Common myeloid progenitor, CD34-positive (primary cell): ENCODE measurements at regions of chr16 and their contacts with region 1.

Region 1: DNA sequence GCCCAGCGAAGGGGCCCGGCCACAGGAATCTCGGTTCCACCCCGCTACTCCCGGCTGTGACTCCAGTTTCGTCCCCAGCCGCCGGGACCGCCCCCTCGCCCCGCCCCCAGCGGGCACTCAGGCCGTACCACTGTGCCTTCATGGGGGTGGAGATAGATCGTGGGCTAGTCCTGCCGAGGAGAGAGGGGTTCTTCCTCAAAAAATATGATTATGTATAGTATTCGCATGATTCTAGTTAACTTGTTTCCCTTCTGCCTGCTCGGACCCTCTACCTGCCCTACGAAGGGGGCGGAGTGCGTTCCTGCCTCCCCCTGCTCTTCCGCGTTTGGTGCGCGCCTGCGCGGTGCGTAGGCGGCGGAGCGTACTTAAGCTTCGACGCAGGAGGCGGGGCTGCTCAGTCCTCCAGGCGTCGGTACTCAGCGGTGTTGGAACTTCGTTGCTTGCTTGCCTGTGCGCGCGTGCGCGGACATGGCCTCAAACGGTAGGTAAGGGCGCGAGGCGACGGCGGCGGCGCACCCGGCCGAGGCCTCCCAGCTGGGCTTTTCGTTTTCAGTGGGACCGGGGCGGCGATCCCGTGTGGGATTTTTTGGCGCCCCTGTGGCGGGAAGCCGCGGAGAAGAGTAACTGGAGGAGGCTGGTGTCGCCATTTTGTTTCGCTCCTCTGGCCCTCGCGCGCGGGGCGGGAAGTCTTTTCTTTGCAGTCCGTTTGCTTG is at the start of gene FUS:
- DNase-seq: peak; percentile 91 to 97 (median 94)
- H3K4me3 ChIP-seq: peak within 1 kb of the TSS; percentile 83 to 95 (median 92)
- H3K27ac ChIP-seq: peak within 1 kb of the TSS; percentile 97 to 99
- H3K4me1 ChIP-seq: peaks cover 17 to 61% (median 52%) of the 10 kb centered on the region in 4 experiments
- H3K27me3 ChIP-seq: no peaks in the 10 kb centered on the region

Region 2: DNA sequence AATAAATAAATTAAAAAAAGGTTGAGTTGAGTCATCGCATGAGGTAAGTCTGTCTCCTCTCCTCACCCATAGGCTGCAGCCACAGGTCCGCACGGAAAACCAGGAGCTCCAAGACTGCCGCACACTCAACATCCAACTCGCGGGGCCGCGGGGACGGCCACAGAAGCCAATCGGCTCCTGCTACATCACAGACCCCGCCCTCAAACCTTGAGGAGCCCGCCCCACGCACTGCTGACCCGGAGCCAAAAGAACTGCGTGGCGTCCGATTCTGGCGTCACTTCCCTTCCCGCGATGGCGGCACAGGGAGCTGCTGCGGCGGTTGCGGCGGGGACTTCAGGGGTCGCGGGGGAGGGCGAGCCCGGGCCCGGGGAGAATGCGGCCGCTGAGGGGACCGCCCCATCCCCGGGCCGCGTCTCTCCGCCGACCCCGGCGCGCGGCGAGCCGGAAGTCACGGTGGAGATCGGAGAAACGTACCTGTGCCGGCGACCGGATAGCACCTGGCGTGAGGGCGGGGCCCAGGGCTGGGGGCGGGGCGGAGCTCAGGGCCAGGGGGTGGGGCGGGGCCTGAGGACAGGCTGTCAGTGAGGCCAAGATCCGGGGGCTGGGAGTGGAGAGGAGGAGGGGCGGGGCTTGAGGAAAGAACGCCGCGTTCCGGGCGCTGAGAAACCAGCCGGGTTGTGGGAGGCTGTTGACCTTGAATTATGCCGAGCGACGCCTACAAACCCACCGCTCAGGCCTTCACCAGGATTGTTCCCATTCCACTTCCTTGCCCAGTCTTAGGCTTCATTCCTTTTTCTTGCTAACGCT is 62.3 kb before region 1 on chr16 and contains the start of gene KAT8:
- CTCF ChIA-PET with region 1: interaction called, 3 read pairs
- POLR2A ChIA-PET with region 1: interaction called, 10 read pairs
- DNase-seq: peak; percentile 98 to 99 (median 99)
- H3K4me3 ChIP-seq: peak within 1 kb of the TSS; percentile 64 to 96 (median 87)
- H3K27ac ChIP-seq: peak within 1 kb of the TSS; percentile 51 to 88
- H3K4me1 ChIP-seq: peaks cover 12 to 40% (median 34%) of the 10 kb centered on the region in 4 experiments
- H3K27me3 ChIP-seq: no peaks in the 10 kb centered on the region

Region 3: DNA sequence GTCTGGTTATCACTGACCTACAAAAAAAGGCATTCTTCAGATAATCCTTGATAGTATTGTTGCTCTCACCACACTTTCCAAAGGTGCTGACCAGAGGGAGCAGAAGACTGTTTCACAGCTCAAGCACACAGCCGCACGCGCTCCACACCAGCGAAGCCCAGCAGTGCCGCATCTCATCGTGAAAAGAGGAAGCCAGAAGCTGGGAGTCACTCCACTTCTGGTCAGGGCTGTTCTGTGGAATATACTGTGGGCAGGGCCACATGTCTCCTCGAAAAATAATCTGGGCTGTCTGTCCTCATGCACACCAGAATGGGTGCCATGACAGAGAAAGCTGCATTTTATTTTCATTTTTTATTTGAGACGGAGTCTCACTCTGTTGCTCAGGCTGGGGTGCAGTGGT is 22.8 kb before region 1 on chr16:
- CTCF ChIA-PET with region 1: interaction called, 13 read pairs
- POLR2A ChIA-PET with region 1: interaction called, 6 read pairs
- DNase-seq: peak in 2 of 3 donors; percentile 68 to 74
- H3K4me3 ChIP-seq: peak overlapping the region in 2 of 7 experiments; percentile 11 to 50
- H3K27ac ChIP-seq: no peak overlapping the region
- H3K4me1 ChIP-seq: peaks cover 0 to 11% (median 6%) of the 10 kb centered on the region in 4 experiments
- H3K27me3 ChIP-seq: peaks cover 0 to 1% (median 0%) of the 10 kb centered on the region in 5 experiments

Region 4: DNA sequence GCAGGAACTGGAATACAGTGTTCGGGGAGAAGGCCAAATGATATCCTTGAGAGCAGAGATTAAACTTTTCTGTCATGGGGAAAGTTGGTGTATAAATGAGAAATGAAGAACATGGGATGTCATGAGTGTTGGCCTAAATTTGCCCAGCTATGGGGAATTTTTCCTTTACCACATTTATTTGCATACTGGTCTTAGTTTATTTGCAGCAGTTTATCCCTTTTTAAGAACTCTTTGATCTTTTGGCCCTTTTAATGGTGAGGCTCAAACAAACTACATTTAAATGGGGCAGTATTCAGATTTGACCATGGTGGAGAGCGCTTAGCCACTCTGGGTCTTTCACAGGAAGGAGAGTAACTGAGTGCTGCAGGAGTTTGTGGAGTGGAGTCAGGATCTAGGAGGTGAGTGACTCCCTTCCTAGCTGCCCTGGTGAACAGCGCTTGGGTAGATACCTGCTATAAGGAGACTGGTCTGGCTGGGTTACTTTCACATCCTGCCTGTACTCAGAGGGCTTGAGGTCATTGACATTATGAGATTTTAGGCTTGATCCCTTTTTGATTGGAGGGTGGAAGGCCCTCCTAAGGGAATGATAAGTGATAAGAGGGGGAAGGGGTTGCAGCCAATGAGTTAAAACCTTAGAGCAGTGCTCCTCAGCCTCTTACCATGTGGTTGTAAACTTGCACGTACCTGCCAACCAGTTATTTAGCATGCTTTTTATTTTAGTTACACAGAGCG is 12.0 kb after region 1 on chr16:
- CTCF ChIA-PET with region 1: no interaction called
- POLR2A ChIA-PET with region 1: interaction called, 12 read pairs
- DNase-seq: no peak
- H3K4me3 ChIP-seq: no peak overlapping the region
- H3K27ac ChIP-seq: no peak overlapping the region
- H3K4me1 ChIP-seq: no peaks in the 10 kb centered on the region
- H3K27me3 ChIP-seq: no peaks in the 10 kb centered on the region

Region 5: GRCh38 chr16:31202414-31203375 is 22.8 kb after region 1 on chr16 and contains the start of gene PYCARD:
- CTCF ChIA-PET with region 1: interaction called, 11 read pairs
- POLR2A ChIA-PET with region 1: interaction called, 12 read pairs
- DNase-seq: peak in 2 of 3 donors; percentile 52 to 81
- H3K4me3 ChIP-seq: peak within 1 kb of the TSS; percentile 75 to 97 (median 88)
- H3K27ac ChIP-seq: peak within 1 kb of the TSS; percentile 15 to 72
- H3K4me1 ChIP-seq: peaks cover 9 to 56% (median 49%) of the 10 kb centered on the region in 4 experiments
- H3K27me3 ChIP-seq: no peaks in the 10 kb centered on the region